ENCODE measurements at regions of chr19 and their contacts with region 1.

Region 1: DNA sequence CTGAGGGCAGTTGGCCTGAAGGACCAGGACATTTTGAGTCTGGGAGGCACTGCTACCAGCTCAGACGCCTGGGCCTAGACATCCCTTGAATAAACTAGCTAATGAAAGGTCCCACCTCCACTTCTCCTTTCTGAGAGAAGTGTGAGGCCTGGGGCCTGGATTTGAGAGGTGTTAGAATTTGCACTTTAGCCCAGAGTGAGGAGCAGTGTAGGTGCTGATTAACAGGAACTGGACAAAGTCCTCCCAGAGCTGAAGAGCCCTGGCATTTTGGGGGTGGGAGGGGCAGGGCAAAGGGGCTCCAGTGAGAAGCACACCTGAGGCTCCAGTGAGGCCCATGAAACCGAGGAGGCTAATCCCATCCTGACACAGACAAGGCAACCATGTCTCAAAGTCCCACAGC is 15.2 kb upstream of the SLC1A5 start:
- DNase-seq: no peak
- ATAC-seq: no peak; a peak in 1 of 6 replicates
- H3K4me3 ChIP-seq: no peak overlapping the region
- H3K27ac ChIP-seq: peak overlapping the region in 1 of 2 experiments; percentile 47; a peak in 3 of 6 replicates
- H3K4me1 ChIP-seq: peaks cover 12% of the 10 kb centered on the region; the same call in 2 of the 3 replicates
- CTCF ChIP-seq: no peak
- EP300 ChIP-seq: no peak
- POLR2A ChIP-seq: no peak
- RAD21 ChIP-seq: no peak

Region 2: DNA sequence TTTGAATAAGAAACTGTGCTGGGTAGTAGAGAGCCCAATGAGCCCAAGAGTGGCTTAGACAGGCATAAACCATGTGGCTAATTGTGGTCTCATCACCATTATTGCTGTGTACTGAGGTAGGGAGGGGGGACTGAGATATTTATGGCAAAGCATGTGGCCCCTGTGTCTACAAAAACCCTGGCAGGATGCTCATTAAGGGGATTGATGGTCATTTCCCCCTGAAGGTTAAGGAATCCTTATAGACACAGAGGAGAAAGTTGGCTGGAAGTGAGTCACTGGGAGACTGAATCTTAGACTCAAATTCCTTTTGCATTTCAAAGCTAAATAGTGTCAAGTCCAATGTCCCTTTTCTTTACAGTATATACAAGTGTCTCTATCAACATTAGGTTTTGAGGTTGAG is 132.7 kb before region 1 on chr19:
- CTCF ChIA-PET with region 1: no interaction called
- POLR2A ChIA-PET with region 1: no interaction called
- DNase-seq: no peak
- ATAC-seq: no peak
- H3K4me3 ChIP-seq: no peak overlapping the region
- H3K27ac ChIP-seq: no peak overlapping the region
- H3K4me1 ChIP-seq: no peaks in the 10 kb centered on the region
- CTCF ChIP-seq: no peak
- EP300 ChIP-seq: no peak
- POLR2A ChIP-seq: no peak
- RAD21 ChIP-seq: no peak

Region 3: DNA sequence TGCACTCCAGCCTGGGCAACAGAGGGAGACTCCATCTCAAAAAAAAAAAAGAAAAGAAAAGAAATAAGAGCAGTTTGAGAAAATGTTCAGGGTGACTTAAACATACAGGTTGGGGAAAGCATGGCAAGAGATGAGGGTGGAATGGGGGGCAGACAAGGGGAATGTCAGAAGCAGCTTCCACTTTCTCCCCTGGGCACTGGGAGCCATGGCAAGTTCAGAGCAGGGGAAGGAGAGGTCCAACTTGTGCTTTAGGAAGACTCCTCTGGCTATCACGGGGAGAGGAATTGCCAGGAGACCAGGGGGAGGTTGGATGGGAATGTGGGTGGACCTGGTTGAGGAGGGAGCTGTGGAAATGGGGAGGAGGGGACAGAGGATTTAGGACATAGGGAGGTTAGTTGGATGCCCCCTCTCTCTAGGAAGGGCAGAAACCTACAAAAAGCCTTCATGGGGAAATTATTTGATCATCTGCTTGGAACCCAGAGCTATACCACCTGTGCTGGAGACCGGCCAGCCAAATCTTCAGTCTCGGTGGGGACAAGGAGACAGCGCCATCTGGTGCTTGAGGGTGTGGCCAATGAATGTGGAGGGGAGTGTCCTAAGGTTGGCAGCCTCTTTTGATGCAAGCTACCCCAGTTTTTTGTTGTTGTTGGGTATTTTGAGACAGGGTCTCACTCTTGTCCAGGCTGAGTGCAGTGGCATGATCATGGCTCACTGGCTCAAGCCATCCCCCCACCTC is 50.0 kb before region 1 on chr19:
- CTCF ChIA-PET with region 1: interaction called, 15 read pairs
- POLR2A ChIA-PET with region 1: interaction called, 3 read pairs
- DNase-seq: peak; percentile 64 to 79
- ATAC-seq: peak; percentile 22 to 45; a peak in 3 of 6 replicates
- H3K4me3 ChIP-seq: no peak overlapping the region
- H3K27ac ChIP-seq: no peak overlapping the region
- H3K4me1 ChIP-seq: peaks cover 4% of the 10 kb centered on the region; the same call in 1 of the 3 replicates
- CTCF ChIP-seq: peak; percentile 65
- EP300 ChIP-seq: no peak
- POLR2A ChIP-seq: no peak
- RAD21 ChIP-seq: peak in 1 of 2 experiments; percentile 46; a peak in 1 of 5 replicates

Region 4: DNA sequence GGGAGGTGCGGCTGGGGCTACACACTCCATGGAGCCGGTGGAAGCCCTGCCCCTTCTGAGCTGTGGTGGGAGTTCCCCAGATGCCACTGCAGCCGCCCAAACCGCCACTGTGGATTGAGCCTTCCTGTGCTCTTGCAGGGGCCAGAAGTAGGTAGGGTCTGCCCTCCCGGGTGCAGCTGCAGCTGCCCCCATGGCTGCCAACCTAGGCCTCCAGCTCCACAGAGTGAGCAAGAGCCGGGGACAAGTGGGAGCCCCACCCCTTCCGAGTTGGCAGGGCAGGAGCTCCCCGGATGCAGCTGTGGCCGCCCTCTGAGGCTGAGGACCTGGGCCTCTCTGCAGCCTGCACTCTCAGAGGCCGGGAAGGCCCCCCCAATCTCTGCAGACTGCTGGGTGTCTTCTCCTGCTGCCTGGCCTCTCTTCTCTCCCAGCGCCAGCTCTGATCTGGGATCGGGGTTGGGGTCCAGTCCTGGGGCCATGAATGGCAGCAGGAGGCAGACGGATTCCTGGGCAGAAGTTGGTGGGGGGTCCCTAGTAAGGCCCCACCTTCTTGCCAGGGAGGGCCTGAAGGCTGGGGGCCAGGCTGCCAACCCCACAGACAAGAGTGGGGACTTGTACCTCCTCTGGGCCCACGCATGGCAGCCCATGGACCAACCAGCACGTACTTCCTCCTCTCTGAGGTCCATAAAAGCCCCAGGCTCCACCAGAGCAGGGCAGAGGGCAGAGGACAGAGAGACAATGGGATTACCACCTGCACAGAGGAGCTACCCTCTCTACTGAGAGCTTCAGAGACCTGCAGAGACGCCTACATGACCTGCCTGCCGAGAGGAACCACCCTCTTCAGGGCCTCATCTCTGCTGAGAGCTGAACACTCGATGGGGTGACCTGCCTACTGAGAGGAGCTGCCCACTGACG is 18.2 kb after region 1 on chr19:
- CTCF ChIA-PET with region 1: interaction called, 13 read pairs
- POLR2A ChIA-PET with region 1: interaction called, 3 read pairs
- DNase-seq: no peak
- ATAC-seq: peak; percentile 11 to 32; a peak in 3 of 6 replicates
- H3K4me3 ChIP-seq: no peak overlapping the region
- H3K27ac ChIP-seq: peak overlapping the region in 1 of 2 experiments; percentile 15; a peak in 1 of 6 replicates
- H3K4me1 ChIP-seq: no peaks in the 10 kb centered on the region
- CTCF ChIP-seq: no peak
- EP300 ChIP-seq: no peak
- POLR2A ChIP-seq: no peak
- RAD21 ChIP-seq: no peak

Region 5: GRCh38 chr19:46828484-46828883 is 24.9 kb after region 1 on chr19:
- CTCF ChIA-PET with region 1: interaction called, 25 read pairs
- POLR2A ChIA-PET with region 1: interaction called, 8 read pairs
- DNase-seq: no peak
- ATAC-seq: no peak
- H3K4me3 ChIP-seq: no peak overlapping the region
- H3K27ac ChIP-seq: no peak overlapping the region
- H3K4me1 ChIP-seq: peaks cover 10% of the 10 kb centered on the region
- CTCF ChIP-seq: no peak
- EP300 ChIP-seq: no peak
- POLR2A ChIP-seq: no peak
- RAD21 ChIP-seq: no peak

Region 6: DNA sequence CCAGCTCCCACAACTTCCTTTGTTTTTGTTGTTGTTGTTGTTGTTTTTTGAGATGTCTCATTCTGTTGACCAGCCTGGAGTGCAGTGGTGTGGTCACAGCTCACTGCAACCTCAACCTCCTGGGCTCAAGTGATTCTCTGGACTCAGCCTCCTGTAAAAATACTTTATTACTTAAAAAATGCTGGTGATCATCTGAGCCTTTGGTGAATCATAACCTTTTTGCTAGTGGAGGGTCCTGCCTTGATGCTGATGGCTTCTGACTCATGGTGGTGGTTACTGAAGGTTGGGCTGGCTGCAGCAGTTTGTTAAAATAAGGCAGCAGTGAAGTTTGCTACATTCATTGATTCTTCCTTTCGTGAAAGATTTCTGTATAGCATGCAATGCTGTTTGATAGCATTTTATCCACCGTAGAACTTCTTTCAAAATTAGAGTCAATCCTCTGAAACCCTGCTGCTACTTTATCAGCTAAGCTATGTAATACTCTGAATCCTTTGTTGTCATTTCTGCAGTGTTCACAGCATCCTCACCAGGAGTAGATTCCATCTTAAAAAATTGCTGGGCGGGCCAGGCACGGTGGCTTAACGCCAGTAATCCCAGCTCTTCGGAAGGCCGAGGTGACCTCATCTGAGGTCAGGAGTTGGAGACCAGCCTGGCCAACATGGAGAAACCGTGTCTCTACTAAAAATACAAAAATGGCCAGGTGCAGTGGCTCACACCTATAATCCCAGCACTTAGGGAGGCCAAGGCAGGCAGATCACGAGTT is 75.2 kb after region 1 on chr19:
- CTCF ChIA-PET with region 1: no interaction called
- POLR2A ChIA-PET with region 1: no interaction called
- DNase-seq: no peak
- ATAC-seq: peak; percentile 81 to 90
- H3K4me3 ChIP-seq: no peak overlapping the region
- H3K27ac ChIP-seq: peak overlapping the region; percentile 3 to 79; a peak in 4 of 6 replicates
- H3K4me1 ChIP-seq: peaks cover 65% of the 10 kb centered on the region
- CTCF ChIP-seq: no peak
- EP300 ChIP-seq: no peak
- POLR2A ChIP-seq: no peak
- RAD21 ChIP-seq: no peak

Region 7: DNA sequence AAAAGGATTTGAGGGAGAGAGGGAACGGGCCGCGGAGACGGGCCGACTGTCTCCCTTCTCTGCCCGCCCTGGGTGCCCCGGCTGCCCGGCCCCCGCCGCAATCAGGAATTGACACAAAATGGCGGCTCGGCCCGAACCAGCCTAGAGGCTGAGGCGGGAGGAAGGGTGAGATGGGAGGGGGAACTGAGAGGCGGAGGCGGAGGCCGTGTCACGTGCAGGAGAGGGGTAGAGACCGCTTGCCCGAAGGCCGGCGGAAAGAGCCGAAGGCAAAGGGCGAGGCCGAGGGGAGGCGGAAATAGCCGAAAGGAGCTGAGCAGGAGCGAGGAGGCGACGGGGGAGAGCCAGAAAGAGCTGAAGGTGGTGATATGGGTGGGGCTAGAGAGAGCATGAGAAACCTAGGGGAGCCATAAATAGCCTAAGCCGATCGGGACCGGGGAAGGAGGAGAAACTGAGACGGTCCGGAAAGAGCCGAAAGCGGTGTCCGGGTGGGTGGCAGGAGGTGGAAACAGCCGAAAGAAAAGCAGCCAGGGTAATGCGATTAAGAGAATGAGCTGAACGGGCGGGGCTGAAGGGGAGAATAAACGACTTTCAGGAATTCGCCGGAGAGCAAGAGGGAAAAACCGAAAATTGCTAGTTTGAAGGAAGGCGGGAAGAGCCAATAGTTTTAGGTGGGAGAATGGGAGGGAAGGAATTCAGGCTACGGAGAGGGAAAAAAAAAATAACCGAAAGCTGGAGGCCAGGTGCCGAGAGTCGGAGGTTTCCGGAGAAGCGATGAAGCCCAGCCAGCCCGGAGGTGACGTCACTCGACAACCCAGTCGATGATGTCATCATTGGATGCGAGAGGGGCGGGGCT is 309.7 kb after region 1 on chr19 and contains the start of gene ZC3H4:
- CTCF ChIA-PET with region 1: no interaction called
- POLR2A ChIA-PET with region 1: no interaction called
- DNase-seq: peak; percentile 99 to 100
- ATAC-seq: peak; percentile 81 to 92
- H3K4me3 ChIP-seq: peak within 1 kb of the TSS; percentile 98
- H3K27ac ChIP-seq: peak within 1 kb of the TSS; percentile 99
- H3K4me1 ChIP-seq: peaks cover 27% of the 10 kb centered on the region
- CTCF ChIP-seq: no peak
- EP300 ChIP-seq: no peak
- POLR2A ChIP-seq: peak; percentile 75
- RAD21 ChIP-seq: no peak
- polyA plus RNA-seq, gene ZC3H4: 7.7 and 9.6 TPM in 2 replicates

Measured in A549 (cell line).